Ovary (tissue), 10 donors: ENCODE measurements at regions of chr7 and their contacts with region 1.

Region 1: DNA sequence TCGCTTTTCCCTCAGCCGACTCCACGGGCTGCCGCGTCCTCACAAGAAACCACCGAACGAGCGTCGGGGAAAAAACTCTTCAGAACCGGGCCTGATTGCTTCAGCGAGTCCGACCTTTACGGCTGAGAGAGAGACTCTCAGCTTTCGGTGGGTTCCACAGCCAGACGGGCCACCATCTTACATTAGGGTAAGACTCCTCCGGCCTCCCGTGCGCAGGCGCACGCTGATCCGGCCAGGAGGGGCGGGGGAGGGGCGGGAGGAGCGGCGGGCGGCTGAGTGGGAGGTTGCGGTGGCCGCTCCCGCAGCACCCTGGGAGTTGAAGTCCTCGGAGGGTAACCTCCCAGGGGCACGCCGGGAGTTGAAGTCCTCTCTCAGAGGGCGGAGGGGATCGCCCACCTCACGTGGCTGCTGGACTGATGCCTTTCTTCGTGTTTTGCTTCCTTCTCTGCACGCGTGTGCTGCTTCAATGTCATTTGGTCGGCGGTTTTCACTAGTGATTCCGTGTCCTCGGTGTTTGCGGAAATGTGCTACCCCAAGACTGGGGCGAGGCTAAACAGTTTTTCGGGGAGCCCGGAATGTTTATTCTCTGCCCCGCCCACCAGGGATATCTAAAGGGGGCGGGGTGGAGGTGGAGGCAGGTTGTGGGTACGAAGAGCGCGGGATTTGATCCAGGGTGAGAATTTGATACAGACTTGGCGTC is at the start of gene CNOT4:
- DNase-seq: peak; percentile 95 to 98 (median 95)
- H3K4me3 ChIP-seq: peak within 1 kb of the TSS; percentile 84
- H3K27ac ChIP-seq: peak within 1 kb of the TSS; percentile 72 to 90
- H3K4me1 ChIP-seq: peaks cover 4% of the 10 kb centered on the region
- H3K27me3 ChIP-seq: no peaks in the 10 kb centered on the region
- CTCF ChIP-seq: no peak
- EP300 ChIP-seq: no peak
- POLR2A ChIP-seq: peak; percentile 61
- total RNA-seq, gene CNOT4: 16.3 to 38.9 (median 32.9) TPM

Region 2: GRCh38 chr7:135274495-135275268 is 235.4 kb before region 1 on chr7:
- intact Hi-C with region 1: loop called in 1 of 4 experiments (anchors 5 kb)
- DNase-seq: peak; percentile 42 to 72 (median 62)
- H3K4me3 ChIP-seq: no peak overlapping the region
- H3K27ac ChIP-seq: no peak overlapping the region
- H3K4me1 ChIP-seq: no peaks in the 10 kb centered on the region
- H3K27me3 ChIP-seq: no peaks in the 10 kb centered on the region
- CTCF ChIP-seq: peak; percentile 54 to 66 (median 60)
- EP300 ChIP-seq: no peak
- POLR2A ChIP-seq: no peak